CD8-positive, alpha-beta T cell (primary cell): ENCODE measurements at regions of chr11 and their contacts with region 1.

Region 1: DNA sequence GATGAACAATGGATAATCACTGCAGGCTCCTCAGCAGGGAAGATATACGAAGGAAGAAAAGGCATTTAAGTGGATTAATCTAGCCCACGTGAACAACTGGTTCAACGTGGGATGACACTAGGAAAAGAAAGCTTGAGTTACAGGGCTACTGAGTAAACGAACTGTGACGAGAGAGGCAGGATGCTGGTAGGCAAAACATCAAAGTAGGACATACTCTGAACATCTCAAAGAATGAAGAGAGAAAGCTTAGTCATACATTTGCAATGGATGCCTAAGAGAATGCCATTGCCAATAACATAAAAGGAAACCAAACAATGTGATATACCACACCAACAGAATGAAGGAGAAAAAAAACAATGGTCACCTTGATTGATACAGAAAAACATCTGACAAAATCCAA is 12.9 kb downstream of the USP28 start:
- DNase-seq: peak in 1 of 9 experiments; percentile 46
- ATAC-seq: peak; percentile 54
- H3K4me3 ChIP-seq: no peak overlapping the region
- H3K4me3 Mint-ChIP-seq: no peak overlapping the region
- H3K27ac ChIP-seq: peak overlapping the region in 1 of 2 experiments; percentile 61
- H3K27ac Mint-ChIP-seq: peak overlapping the region; percentile 43
- H3K4me1 ChIP-seq: peaks cover 17% of the 10 kb centered on the region
- H3K4me1 Mint-ChIP-seq: peaks cover 33% of the 10 kb centered on the region
- H3K27me3 ChIP-seq: no peaks in the 10 kb centered on the region
- H3K27me3 Mint-ChIP-seq: no peaks in the 10 kb centered on the region
- CTCF ChIP-seq: no peak

Region 2: DNA sequence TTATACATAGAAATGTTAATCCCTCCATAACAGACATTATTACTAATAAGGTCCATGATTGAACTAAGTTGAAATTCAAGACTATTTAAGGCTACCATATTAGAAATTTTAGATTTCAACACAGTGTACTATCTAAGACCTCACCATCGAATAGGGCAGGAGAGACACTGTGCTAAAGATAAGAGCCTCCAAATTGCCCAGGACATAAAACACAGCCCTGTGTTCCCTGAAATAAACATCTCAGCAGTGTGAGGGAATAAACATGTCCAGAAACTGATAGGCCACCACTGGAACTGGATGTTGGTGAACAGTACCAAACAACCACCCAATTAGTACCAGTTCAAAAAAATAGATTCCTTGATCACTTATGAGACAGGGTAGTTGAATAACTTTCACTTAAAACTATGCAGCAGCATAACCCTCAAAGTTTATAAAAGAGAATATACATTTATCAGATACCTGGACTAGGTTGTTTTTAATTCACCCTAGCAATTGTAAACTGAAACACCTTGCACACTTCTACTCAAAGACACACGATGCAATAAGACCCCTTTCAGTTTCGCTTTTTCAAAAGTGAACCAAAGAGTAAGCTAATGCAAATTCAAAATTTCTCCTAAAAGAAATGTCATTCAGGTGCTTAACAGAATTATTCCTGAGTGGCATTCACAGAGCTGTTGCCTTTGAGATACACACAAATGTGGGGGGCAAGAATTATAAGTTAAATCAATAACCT is 21.3 kb before region 1 on chr11:
- CTCF ChIA-PET with region 1: no interaction called
- POLR2A ChIA-PET with region 1: no interaction called
- intact Hi-C with region 1: loop called in 1 of 2 experiments (anchors 1 kb)
- DNase-seq: peak in 1 of 9 experiments; percentile 16
- ATAC-seq: no peak
- H3K4me3 ChIP-seq: no peak overlapping the region
- H3K4me3 Mint-ChIP-seq: peak overlapping the region; percentile 27
- H3K27ac ChIP-seq: peak overlapping the region in 1 of 2 experiments; percentile 14
- H3K27ac Mint-ChIP-seq: peak overlapping the region; percentile 21
- H3K4me1 ChIP-seq: no peaks in the 10 kb centered on the region
- H3K4me1 Mint-ChIP-seq: peaks cover 5% of the 10 kb centered on the region
- H3K27me3 ChIP-seq: no peaks in the 10 kb centered on the region
- H3K27me3 Mint-ChIP-seq: no peaks in the 10 kb centered on the region
- CTCF ChIP-seq: no peak